ENCODE measurements at regions of chr7 and their contacts with region 1.

Region 1: GRCh38 chr7:76069238-76069638 is 21.3 kb downstream of the MDH2 start:
- DNase-seq: peak; percentile 55 to 57
- H3K4me3 ChIP-seq: no peak overlapping the region
- H3K4me3 Mint-ChIP-seq: no peak overlapping the region
- H3K27ac Mint-ChIP-seq: no peak overlapping the region
- H3K4me1 ChIP-seq: no peaks in the 10 kb centered on the region
- H3K4me1 Mint-ChIP-seq: no peaks in the 10 kb centered on the region
- H3K27me3 ChIP-seq: no peaks in the 10 kb centered on the region
- H3K27me3 Mint-ChIP-seq: no peaks in the 10 kb centered on the region
- CTCF ChIP-seq: peak in 1 of 2 experiments; percentile 46

Region 2: GRCh38 chr7:76108540-76109241 is 39.5 kb after region 1 on chr7:
- CTCF ChIA-PET with region 1: no interaction called
- POLR2A ChIA-PET with region 1: no interaction called
- intact Hi-C with region 1: no loop called
- DNase-seq: peak; percentile 21 to 50
- H3K4me3 ChIP-seq: no peak overlapping the region
- H3K4me3 Mint-ChIP-seq: no peak overlapping the region
- H3K27ac Mint-ChIP-seq: no peak overlapping the region
- H3K4me1 ChIP-seq: peaks cover 10% of the 10 kb centered on the region; the same call in 1 of the 2 replicates
- H3K4me1 Mint-ChIP-seq: peaks cover 12% of the 10 kb centered on the region
- H3K27me3 ChIP-seq: no peaks in the 10 kb centered on the region
- H3K27me3 Mint-ChIP-seq: no peaks in the 10 kb centered on the region
- CTCF ChIP-seq: no peak

Region 3: DNA sequence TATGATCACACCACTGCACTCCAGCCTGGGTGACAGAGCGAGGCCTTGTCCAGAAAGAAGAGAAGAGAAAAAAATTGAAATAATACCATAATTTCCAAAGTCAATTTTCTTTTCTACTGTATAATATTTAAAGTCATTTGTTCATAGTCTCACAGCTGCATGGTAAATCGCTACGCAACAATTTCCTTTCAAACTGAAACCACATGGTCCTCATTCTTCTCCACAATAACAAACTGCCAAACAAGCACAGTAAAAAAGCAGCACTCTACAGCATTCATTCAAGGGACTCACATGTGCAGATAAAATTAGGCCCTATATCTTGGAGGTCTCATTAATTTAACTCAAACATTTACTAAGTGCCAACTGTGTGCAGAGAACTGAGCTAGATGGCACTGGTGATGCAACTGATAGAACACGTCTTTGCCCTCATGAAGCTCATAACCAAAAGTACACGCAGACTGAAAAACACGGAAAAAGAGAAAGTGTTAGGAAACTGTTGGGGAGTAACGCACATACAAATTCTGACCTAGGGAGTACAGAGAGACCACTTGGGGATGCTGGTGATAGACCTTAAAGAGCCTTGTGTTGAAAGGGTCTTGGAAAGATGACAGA is 64.0 kb after region 1 on chr7:
- CTCF ChIA-PET with region 1: interaction called, 12 read pairs
- POLR2A ChIA-PET with region 1: interaction called, 3 read pairs
- intact Hi-C with region 1: loop called (anchors 1 kb)
- DNase-seq: no peak
- H3K4me3 ChIP-seq: no peak overlapping the region
- H3K4me3 Mint-ChIP-seq: no peak overlapping the region
- H3K27ac Mint-ChIP-seq: no peak overlapping the region
- H3K4me1 ChIP-seq: no peaks in the 10 kb centered on the region
- H3K4me1 Mint-ChIP-seq: no peaks in the 10 kb centered on the region
- H3K27me3 ChIP-seq: no peaks in the 10 kb centered on the region
- H3K27me3 Mint-ChIP-seq: peaks cover 21% of the 10 kb centered on the region
- CTCF ChIP-seq: no peak

Measured in Caco-2 (cell line).